ENCODE measurements at regions of chr5 and their contacts with region 1.

Region 1: DNA sequence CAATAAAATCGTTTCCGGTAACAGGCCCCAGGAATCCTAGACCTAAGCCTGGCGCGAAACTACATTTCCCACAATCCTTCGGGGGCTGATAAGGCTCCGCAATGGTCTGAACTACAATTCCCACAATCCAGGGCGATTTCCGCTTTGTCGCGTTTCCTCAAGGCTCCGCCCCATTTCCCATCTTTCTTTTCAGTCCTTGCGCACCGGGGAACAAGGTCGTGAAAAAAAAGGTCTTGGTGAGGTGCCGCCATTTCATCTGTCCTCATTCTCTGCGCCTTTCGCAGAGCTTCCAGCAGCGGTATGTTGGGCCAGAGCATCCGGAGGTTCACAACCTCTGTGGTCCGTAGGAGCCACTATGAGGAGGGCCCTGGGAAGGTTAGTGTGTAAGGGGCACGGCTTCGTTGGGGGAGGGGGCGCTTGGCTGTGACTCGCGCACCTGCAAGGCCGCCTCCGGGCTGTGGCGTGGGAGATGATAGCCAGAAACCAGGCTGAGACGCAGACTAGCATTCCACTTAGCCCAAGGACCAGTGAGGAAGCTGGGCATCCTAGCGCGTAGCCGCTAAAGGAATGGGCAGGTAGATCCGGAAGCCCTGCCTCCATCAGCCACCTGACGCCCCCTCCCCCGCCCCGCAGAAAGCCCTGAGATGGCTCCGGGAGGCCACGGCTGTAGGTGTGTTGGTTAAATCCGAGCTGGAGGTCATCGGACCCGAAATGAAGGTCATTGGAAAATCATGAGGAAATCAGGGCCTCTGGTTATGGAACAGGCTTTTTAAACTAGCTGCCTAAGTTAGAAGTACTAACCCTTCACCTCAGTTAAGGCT is at the start of gene COX7C:
- H3K4me3 Mint-ChIP-seq: peak within 1 kb of the TSS; percentile 93
- H3K27ac Mint-ChIP-seq: peak within 1 kb of the TSS; percentile 96
- H3K4me1 Mint-ChIP-seq: peaks cover 5% of the 10 kb centered on the region
- H3K27me3 Mint-ChIP-seq: peaks cover 3% of the 10 kb centered on the region

Region 2: DNA sequence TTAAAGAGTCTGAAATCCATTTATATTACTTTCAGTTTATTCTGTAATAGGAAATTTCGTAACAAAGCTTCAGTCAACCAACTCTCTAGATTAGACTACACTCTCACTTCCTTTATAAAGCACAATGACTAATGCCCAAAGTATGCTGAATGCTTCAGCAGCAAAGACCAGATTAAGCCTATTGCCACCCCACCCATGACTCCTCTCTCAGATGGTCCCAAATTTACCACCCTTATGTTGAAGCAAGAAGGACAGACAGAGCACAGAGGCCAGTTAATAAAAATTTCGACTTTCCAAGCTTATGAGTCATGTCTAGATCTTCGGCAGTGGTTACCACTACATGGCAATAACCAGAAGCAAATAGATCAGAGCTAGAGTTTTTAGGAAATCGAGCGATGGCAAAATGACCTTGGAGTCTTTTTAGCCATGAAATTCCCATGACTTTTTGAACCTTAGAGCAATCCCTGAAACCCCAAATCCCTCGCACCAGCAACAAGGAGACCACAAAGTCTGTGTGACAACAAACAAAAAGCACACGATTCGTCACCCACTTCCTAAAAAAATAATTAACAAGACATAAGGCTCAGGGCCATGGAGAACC is 361.9 kb after region 1 on chr5:
- intact Hi-C with region 1: loop called (anchors 10 kb)
- H3K4me3 Mint-ChIP-seq: peak overlapping the region; percentile 45
- H3K27ac Mint-ChIP-seq: peak overlapping the region; percentile 96
- H3K4me1 Mint-ChIP-seq: peaks cover 50% of the 10 kb centered on the region
- H3K27me3 Mint-ChIP-seq: no peaks in the 10 kb centered on the region